Activated B cell treated with CpG ODN at 0.5 μM for 24 hours (primary cell): ENCODE measurements at regions of chr22 and their contacts with region 1.

Region 1: GRCh38 chr22:17552737-17553136 is 10.6 kb upstream of the SLC25A18 start:
- DNase-seq: no peak
- ATAC-seq: no peak
- H3K4me3 Mint-ChIP-seq: no peak overlapping the region
- H3K27ac Mint-ChIP-seq: no peak overlapping the region
- H3K4me1 Mint-ChIP-seq: no peaks in the 10 kb centered on the region
- H3K27me3 Mint-ChIP-seq: no peaks in the 10 kb centered on the region
- CTCF ChIP-seq: no peak

Region 2: DNA sequence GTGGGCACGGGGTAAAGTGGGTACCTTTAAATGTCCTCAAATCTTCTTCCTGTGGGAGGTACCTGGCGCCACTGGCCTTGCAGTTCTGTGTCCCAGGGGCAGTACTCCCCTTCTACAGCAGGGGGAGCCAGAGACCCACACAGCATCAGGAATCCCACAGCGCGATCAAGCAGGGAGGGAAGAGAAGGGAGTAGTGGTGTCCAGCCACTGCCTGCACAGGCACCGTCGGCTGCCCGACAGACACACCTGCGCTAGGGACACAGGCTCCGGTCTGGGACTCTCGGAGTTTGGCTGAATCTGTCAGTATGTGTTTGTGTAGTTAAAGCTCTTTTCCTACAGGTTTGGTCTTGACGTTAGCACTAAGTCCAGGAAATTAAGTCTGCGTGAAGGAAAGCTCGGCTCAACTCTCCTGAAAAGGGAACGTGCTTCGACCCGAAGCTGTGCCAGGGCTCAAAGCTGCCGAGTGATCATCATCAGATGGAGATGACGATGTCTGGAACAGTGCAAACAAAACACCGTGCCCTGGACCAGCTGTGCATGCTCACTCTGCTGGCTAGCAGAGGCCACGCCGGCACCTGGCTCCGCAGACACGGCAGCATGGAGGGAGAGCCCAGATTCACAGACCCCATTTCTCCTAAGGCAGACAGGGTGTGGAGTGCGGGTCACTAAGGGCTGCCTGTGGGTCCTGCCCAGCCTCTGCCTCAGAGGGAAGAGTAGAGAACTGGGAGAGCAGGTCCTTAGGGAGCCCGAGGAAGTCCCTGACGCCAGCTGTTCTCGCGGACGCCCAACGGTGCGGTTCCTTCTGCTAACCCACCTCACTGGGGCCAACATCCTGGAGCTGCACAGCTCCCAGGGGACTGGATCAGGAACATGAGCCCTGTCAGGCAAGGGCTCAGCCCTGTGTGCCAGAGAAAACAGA is 277.6 kb after region 1 on chr22:
- CTCF ChIA-PET with region 1: no interaction called
- POLR2A ChIA-PET with region 1: no interaction called
- intact Hi-C with region 1: loop called (anchors 10 kb)
- DNase-seq: peak; percentile 75
- ATAC-seq: peak; percentile 98
- H3K4me3 Mint-ChIP-seq: no peak overlapping the region
- H3K27ac Mint-ChIP-seq: peak overlapping the region; percentile 27
- H3K4me1 Mint-ChIP-seq: peaks cover 7% of the 10 kb centered on the region
- H3K27me3 Mint-ChIP-seq: no peaks in the 10 kb centered on the region
- CTCF ChIP-seq: peak; percentile 97